ENCODE measurements at regions of chr10 and their contacts with region 1.

Region 1: DNA sequence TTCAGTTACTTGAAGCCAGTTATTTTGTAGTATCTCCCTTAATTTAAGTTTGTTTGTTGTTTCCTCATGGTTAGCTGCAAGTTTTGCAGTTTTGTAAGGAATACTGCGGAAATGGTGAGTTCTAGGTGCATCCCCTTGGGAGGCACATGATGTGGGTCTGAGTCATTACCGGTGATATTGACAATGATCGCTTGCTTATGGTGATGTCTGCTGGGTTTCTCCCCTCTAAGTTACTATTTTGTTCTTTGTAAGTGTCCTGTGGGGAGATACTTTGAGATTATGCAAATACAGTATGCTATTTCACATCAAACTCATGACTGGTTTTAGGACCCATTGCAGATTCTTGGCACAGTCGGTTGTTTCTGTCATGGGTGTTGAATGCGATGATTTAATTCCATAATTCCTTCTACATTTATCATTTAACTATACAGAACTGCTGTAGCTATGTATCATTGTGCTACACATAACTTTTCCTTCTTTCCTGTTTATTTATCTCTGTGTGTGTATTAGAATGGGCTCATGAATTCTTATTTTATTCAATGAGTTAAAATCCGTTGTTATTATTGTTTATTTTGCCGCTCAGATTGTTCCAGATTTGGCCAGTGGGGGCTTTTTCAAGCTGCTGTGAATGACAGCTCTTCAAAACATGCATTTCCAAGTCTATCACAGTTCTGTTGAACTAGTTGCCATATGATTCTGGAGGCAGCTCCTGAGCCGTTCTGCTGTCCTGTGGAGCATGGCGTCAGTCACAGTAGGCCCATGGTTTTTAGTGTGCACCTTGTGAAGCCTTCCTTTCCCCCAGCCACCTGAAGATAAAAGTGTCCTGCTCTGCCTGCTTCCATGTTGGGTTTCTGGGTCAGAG is 18.4 kb downstream of the TSPAN14 start:
- DNase-seq: peak; percentile 41 to 85
- H3K4me3 ChIP-seq: peak overlapping the region; percentile 7; the same call in 1 of the 2 replicates
- H3K27ac ChIP-seq: peak overlapping the region; percentile 91
- H3K4me1 ChIP-seq: peaks cover 97% of the 10 kb centered on the region
- H3K27me3 ChIP-seq: no peaks in the 10 kb centered on the region
- CTCF ChIP-seq: no peak

Region 2: GRCh38 chr10:80484243-80484642 is 11.8 kb after region 1 on chr10:
- CTCF ChIA-PET with region 1: no interaction called
- POLR2A ChIA-PET with region 1: interaction called, 36 read pairs
- intact Hi-C with region 1: no loop called
- DNase-seq: no peak
- H3K4me3 ChIP-seq: no peak overlapping the region
- H3K27ac ChIP-seq: peak overlapping the region; percentile 47; the same call in 1 of the 2 replicates
- H3K4me1 ChIP-seq: peaks cover 45% of the 10 kb centered on the region
- H3K27me3 ChIP-seq: no peaks in the 10 kb centered on the region
- CTCF ChIP-seq: no peak

Region 3: DNA sequence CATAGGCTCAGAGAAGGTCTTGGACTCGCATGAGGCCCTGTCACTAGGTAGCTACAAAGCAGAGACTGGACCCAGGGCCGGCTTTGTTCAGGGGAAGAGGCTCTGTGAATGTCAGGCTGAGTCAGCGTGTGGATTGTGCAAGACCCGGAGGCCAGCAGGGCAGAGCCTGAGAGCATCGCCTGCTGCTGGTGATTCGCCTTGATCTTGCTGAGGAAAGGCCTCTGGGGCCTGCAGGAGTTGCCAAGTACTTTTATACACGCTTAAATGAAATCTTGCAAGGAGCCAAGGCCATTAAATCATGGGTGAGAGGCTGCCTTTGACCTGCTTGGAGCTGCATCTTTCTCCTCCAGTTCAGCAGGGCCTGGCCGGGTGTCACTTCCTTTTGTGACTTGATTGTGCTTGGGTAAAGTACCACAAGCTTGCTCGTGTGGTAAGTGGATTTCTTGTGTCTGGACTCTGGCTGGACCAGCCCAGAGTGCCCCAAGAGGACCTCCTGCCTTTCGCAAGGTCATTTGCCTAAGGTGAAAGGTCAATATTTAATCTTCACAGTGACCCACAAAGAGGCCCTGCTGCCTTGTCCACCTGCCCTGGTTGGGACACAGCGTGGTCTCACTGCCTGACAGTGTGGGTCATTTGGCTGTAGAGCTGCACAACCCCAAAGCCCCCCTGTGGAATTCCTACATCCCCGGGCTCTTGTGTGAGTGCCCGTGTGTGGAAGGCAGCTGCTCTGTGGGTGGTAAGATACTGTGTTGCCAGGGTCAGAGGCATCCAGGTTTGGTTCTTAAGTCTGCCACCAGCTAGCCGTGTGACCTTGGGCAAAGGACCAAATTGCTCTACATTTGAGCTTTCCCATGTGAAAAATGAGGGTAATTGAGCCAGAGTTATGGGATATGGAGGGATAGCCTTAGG is 26.6 kb after region 1 on chr10:
- CTCF ChIA-PET with region 1: interaction called, 3 read pairs
- POLR2A ChIA-PET with region 1: interaction called, 12 read pairs
- intact Hi-C with region 1: loop called (anchors 1 kb)
- DNase-seq: peak; percentile 94 to 99
- H3K4me3 ChIP-seq: peak overlapping the region; percentile 21; the same call in 1 of the 2 replicates
- H3K27ac ChIP-seq: peak overlapping the region; percentile 99
- H3K4me1 ChIP-seq: peaks cover 98% of the 10 kb centered on the region
- H3K27me3 ChIP-seq: no peaks in the 10 kb centered on the region
- CTCF ChIP-seq: no peak

Region 4: DNA sequence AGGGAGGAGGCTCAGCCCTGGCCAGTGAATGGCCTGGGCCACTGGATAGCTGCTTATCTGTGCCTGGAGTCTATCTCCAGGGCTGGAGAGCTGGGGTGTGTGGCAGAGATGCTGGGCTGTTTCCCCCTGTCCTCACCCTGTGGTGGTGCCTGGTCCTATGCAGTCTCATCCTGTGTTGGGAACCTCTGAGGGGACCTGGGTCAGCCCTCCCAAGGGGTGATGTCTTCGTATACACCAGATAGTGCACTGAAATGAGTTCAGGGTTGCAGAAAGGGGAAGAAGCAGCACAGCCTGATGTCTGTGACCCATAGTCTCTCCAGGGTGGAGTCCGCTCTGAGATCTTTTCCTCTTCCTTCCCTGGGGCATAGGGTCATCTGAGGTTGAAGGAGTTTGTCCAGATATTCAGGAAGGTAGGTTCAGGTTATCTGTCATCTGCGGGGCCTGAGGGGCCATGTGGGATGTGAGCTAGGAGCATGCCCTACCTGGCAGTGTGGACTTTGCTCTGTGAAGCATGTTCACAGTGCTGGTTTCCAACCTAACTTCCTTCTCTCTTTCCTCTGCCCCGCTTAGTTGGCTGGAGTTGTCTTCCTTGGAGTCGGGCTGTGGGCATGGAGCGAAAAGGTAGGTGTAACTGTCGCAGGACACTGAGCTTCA is 31.8 kb after region 1 on chr10:
- CTCF ChIA-PET with region 1: interaction called, 10 read pairs
- POLR2A ChIA-PET with region 1: interaction called, 12 read pairs
- intact Hi-C with region 1: loop called (anchors 1 kb)
- DNase-seq: peak; percentile 41 to 65
- H3K4me3 ChIP-seq: peak overlapping the region; percentile 8; the same call in 1 of the 2 replicates
- H3K27ac ChIP-seq: peak overlapping the region; percentile 99
- H3K4me1 ChIP-seq: peaks cover 100% of the 10 kb centered on the region
- H3K27me3 ChIP-seq: no peaks in the 10 kb centered on the region
- CTCF ChIP-seq: no peak

Region 5: DNA sequence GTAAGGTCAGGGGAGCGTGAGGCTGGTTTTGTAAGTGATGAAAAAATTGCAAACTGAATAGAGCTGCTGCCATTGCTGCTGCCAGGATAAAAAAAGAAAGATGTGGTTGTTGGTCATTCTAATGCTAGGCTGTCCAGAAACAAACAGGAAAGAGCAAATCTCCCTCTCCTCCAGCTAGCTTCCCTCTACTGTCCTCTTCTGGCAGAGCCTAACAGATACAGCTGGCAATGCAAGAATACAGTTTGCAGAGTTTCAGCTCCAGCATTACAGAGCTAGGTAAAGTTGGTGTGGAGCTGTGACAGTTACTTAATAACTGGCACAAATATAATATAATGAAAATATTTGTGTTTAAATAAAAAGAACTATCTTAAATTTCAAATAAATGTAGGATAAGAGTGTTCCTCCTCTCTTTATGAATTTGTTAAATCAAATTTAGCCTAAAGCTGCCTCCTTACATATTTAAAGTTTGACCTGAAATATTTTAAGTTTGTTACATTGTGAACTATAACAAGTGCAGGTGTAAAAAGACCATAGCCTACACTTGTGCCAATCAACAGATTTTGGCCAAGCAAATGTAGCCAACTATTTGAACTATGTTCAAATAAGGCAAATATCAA is 472.9 kb after region 1 on chr10:
- CTCF ChIA-PET with region 1: no interaction called
- POLR2A ChIA-PET with region 1: no interaction called
- intact Hi-C with region 1: no loop called
- DNase-seq: no peak
- H3K4me3 ChIP-seq: no peak overlapping the region
- H3K27ac ChIP-seq: no peak overlapping the region
- H3K4me1 ChIP-seq: no peaks in the 10 kb centered on the region
- H3K27me3 ChIP-seq: peaks cover 9% of the 10 kb centered on the region; the same call in 1 of the 2 replicates
- CTCF ChIP-seq: peak; percentile 42; the same call in 1 of the 2 replicates